Body of pancreas (tissue), 4 donors: ENCODE measurements at regions of chr9 and their contacts with region 1.

Region 1: DNA sequence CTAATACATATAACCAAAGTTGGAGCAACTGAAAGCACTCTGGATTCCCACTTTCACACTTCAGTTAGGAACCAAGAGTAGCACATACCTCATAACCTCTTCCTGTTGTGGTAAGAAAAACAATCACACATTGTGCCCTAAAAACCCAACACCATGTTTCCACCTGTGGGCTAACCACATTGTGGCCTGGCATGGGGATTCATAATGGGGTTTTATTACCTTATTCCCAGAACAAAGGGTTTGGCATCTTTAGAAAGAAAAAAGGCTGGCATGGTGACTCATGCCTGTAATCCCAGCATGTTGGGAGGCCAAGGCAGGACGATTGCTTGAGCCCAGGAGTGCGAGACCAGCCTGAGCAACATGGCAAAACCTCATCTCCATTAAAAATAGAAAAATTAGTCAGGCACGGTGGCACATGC is 60.6 kb downstream of the HSD17B3 start:
- DNase-seq: no peak
- ATAC-seq: no peak
- H3K4me3 ChIP-seq: no peak overlapping the region
- H3K27ac ChIP-seq: no peak overlapping the region
- H3K4me1 ChIP-seq: peaks cover 11% of the 10 kb centered on the region
- H3K27me3 ChIP-seq: no peaks in the 10 kb centered on the region
- CTCF ChIP-seq: no peak
- POLR2A ChIP-seq: no peak

Region 2: DNA sequence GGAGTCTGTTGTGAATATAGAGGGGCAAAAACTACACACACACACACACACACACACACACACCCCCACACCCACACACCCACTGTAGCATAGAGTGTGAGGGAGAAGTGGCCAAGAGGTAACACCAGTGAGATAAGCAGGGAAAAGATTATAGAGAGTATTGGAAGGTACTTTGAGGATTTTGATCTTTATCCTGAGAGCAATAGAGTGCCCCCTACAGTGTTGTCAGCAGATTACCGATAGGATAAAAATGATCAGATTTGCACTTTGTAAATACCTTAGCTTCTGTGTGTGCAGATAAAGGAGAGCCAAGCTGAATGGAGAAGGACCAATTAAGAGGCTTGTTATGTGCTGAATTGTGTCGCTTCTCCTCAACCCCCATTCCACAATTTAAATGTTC is 333.6 kb before region 1 on chr9:
- intact Hi-C with region 1: no loop called
- DNase-seq: no peak
- ATAC-seq: no peak
- H3K4me3 ChIP-seq: no peak overlapping the region
- H3K27ac ChIP-seq: no peak overlapping the region
- H3K4me1 ChIP-seq: no peaks in the 10 kb centered on the region
- H3K27me3 ChIP-seq: no peaks in the 10 kb centered on the region
- CTCF ChIP-seq: no peak
- POLR2A ChIP-seq: no peak

Region 3: GRCh38 chr9:96305171-96305570 is 63.8 kb after region 1 on chr9:
- intact Hi-C with region 1: loop called (anchors 5 kb)
- DNase-seq: no peak
- ATAC-seq: no peak
- H3K4me3 ChIP-seq: no peak overlapping the region
- H3K27ac ChIP-seq: no peak overlapping the region
- H3K4me1 ChIP-seq: no peaks in the 10 kb centered on the region
- H3K27me3 ChIP-seq: no peaks in the 10 kb centered on the region
- CTCF ChIP-seq: no peak
- POLR2A ChIP-seq: no peak

Region 4: GRCh38 chr9:96391021-96391765 is 149.8 kb after region 1 on chr9:
- intact Hi-C with region 1: no loop called
- DNase-seq: peak; percentile 65 to 78 (median 72)
- ATAC-seq: peak; percentile 96
- H3K4me3 ChIP-seq: no peak overlapping the region
- H3K27ac ChIP-seq: peak overlapping the region; percentile 12 to 86 (median 74)
- H3K4me1 ChIP-seq: peaks cover 24% of the 10 kb centered on the region
- H3K27me3 ChIP-seq: no peaks in the 10 kb centered on the region
- CTCF ChIP-seq: no peak
- POLR2A ChIP-seq: no peak